ENCODE measurements at regions of chr5 and their contacts with region 1.

Region 1: DNA sequence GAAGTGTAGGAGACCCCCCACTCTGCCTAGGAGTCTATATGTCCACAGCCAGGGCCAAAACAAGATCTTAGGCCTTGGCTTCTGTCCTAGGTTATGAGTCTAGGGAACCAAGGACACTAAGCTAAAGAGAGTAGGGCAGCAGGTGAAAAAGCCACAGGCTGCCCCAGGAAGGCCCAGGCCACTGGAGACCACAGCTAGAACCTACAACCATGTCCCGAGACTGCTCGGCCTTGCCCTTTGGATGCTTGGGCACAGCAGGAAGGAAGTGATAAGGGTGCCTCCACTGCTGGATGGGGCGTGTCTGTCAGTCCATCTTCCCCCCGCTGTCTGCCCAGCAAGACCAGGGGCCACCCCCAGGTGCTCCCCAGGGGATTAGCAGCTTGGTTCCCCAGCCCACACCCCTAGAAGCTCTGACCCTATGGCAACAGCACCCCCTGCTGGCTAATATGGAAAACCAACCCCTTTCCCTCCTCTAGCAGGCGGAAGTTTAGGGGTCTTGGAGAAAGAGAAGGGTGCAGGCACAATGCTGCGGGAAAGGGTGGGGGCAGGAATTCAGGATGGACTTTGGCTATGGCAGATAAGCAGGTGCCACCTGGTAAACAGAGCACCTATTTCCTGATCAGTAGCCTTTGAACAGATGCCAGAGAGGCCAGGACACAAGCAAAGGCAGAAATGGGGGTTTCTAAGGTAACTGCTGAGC is 10.5 kb upstream of the IRF1 start:
- DNase-seq: peak; percentile 64
- ATAC-seq: peak; percentile 46

Region 2: GRCh38 chr5:132272311-132273210 is 228.5 kb before region 1 on chr5:
- intact Hi-C with region 1: loop called (anchors 10 kb)
- DNase-seq: peak; percentile 74
- ATAC-seq: peak; percentile 66

Region 3: GRCh38 chr5:132386644-132387286 is 114.3 kb before region 1 on chr5:
- intact Hi-C with region 1: loop called (anchors 1 kb)
- DNase-seq: peak; percentile 84
- ATAC-seq: peak; percentile 86

Region 4: DNA sequence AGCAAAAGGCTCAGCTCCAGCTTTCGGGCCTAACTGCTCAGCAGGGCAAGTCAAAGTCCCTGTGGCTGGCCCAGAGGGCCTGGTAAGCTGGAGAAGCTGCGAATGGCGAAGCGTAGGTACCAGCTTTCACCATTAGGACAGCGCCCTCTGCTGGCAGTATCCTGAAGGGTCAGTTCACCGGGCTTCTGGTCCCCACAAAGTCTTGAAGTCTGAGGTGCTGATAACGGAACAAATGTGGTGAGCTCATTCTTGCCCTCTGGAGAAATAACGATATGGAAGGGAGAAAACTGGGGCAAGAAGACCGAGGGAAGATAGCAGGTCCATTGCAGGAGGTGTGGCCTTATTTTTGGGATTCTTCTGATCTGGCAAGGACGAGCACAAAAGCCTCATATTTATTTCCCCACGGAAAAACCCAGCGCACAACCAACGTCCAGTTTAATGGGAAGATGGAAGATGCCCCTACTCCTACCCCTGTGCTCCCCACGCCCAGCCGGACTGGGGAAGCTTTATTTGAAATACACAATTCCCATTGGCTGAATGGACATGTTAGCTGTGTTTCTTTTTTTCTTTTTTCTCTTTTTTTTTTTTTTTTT is 319.2 kb after region 1 on chr5:
- intact Hi-C with region 1: loop called (anchors 10 kb)
- DNase-seq: peak; percentile 93
- ATAC-seq: peak; percentile 88

Measured in Right ventricle myocardium superior (tissue), 1 donor.